ENCODE measurements at regions of chr17 and their contacts with region 1.

Region 1: GRCh38 chr17:69235338-69235930 is 6.8 kb upstream of the ABCA10 start:
- DNase-seq: peak; percentile 97
- ATAC-seq: peak; percentile 100
- H3K4me3 ChIP-seq: no peak overlapping the region
- H3K27ac ChIP-seq: no peak overlapping the region
- H3K4me1 ChIP-seq: no peaks in the 10 kb centered on the region
- H3K27me3 ChIP-seq: no peaks in the 10 kb centered on the region
- CTCF ChIP-seq: peak; percentile 96

Region 2: GRCh38 chr17:68771867-68772515 is 463.4 kb before region 1 on chr17:
- CTCF ChIA-PET with region 1: interaction called, 5 read pairs
- POLR2A ChIA-PET with region 1: no interaction called
- intact Hi-C with region 1: loop called (anchors 1 kb)
- DNase-seq: peak; percentile 81
- ATAC-seq: peak; percentile 69
- H3K4me3 ChIP-seq: peak overlapping the region; percentile 65
- H3K27ac ChIP-seq: no peak overlapping the region
- H3K4me1 ChIP-seq: peaks cover 13% of the 10 kb centered on the region
- H3K27me3 ChIP-seq: no peaks in the 10 kb centered on the region
- CTCF ChIP-seq: peak; percentile 88

Region 3: GRCh38 chr17:68794636-68795434 is 440.6 kb before region 1 on chr17:
- CTCF ChIA-PET with region 1: interaction called, 4 read pairs
- POLR2A ChIA-PET with region 1: no interaction called
- intact Hi-C with region 1: loop called (anchors 1 kb)
- DNase-seq: peak; percentile 57
- ATAC-seq: peak; percentile 78
- H3K4me3 ChIP-seq: no peak overlapping the region
- H3K27ac ChIP-seq: no peak overlapping the region
- H3K4me1 ChIP-seq: peaks cover 25% of the 10 kb centered on the region
- H3K27me3 ChIP-seq: no peaks in the 10 kb centered on the region
- CTCF ChIP-seq: peak; percentile 77

Region 4: GRCh38 chr17:68972119-68972704 is 263.2 kb before region 1 on chr17:
- CTCF ChIA-PET with region 1: no interaction called
- POLR2A ChIA-PET with region 1: no interaction called
- intact Hi-C with region 1: loop called (anchors 1 kb)
- DNase-seq: peak; percentile 62
- ATAC-seq: peak; percentile 65
- H3K4me3 ChIP-seq: no peak overlapping the region
- H3K27ac ChIP-seq: no peak overlapping the region
- H3K4me1 ChIP-seq: no peaks in the 10 kb centered on the region
- H3K27me3 ChIP-seq: peaks cover 8% of the 10 kb centered on the region
- CTCF ChIP-seq: peak; percentile 89

Region 5: DNA sequence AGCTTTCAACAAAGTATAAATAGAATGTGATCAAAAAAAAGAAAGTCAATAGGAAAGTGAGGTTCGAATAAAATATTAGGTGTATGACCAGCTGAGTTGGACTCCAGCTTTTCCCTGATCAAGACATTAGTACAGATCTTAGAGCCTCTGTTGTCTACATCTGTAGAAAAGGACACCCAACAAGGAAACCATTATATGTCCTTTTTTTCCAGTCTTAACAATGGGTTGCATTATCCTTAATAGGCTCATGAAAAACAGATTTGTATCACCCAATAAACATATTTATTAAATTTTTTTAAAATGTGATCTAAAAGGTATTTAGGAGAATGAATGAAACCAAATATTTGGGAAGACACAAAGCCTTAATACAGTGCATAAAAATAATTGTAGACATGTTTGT is 111.8 kb before region 1 on chr17:
- CTCF ChIA-PET with region 1: no interaction called
- POLR2A ChIA-PET with region 1: no interaction called
- intact Hi-C with region 1: no loop called
- DNase-seq: no peak
- ATAC-seq: no peak
- H3K4me3 ChIP-seq: no peak overlapping the region
- H3K27ac ChIP-seq: no peak overlapping the region
- H3K4me1 ChIP-seq: no peaks in the 10 kb centered on the region
- H3K27me3 ChIP-seq: peaks cover 32% of the 10 kb centered on the region
- CTCF ChIP-seq: no peak

Region 6: GRCh38 chr17:69175812-69176795 is 59.3 kb before region 1 on chr17:
- CTCF ChIA-PET with region 1: no interaction called
- POLR2A ChIA-PET with region 1: no interaction called
- intact Hi-C with region 1: loop called (anchors 2 kb)
- DNase-seq: peak; percentile 95
- ATAC-seq: peak; percentile 99
- H3K4me3 ChIP-seq: peak overlapping the region; percentile 2; the same call in 1 of the 2 replicates
- H3K27ac ChIP-seq: peak overlapping the region; percentile 83
- H3K4me1 ChIP-seq: peaks cover 24% of the 10 kb centered on the region
- H3K27me3 ChIP-seq: no peaks in the 10 kb centered on the region
- CTCF ChIP-seq: no peak

Region 7: GRCh38 chr17:69223809-69224208 is 11.6 kb before region 1 on chr17:
- CTCF ChIA-PET with region 1: no interaction called
- POLR2A ChIA-PET with region 1: no interaction called
- intact Hi-C with region 1: no loop called
- DNase-seq: no peak
- ATAC-seq: peak; percentile 18; the same call in 1 of the 2 replicates
- H3K4me3 ChIP-seq: no peak overlapping the region
- H3K27ac ChIP-seq: no peak overlapping the region
- H3K4me1 ChIP-seq: no peaks in the 10 kb centered on the region
- H3K27me3 ChIP-seq: no peaks in the 10 kb centered on the region
- CTCF ChIP-seq: no peak

Measured in PC-3 (cell line).